Heart right ventricle (tissue), 16 donors: ENCODE measurements at regions of chr5 and their contacts with region 1.

Region 1: GRCh38 chr5:32232441-32233219 is 58.5 kb upstream of the GOLPH3 start:
- DNase-seq: peak; percentile 68 to 79
- ATAC-seq: peak; percentile 72 to 91 (median 89)
- H3K4me3 ChIP-seq: no peak overlapping the region
- H3K27ac ChIP-seq: peak overlapping the region in 7 of 10 donors; percentile 6 to 73 (median 26)
- H3K4me1 ChIP-seq: peaks cover 3 to 47% (median 26%) of the 10 kb centered on the region in 9 donors
- H3K27me3 ChIP-seq: no peaks in the 10 kb centered on the region
- CTCF ChIP-seq: peak; percentile 68 to 89 (median 84)

Region 2: DNA sequence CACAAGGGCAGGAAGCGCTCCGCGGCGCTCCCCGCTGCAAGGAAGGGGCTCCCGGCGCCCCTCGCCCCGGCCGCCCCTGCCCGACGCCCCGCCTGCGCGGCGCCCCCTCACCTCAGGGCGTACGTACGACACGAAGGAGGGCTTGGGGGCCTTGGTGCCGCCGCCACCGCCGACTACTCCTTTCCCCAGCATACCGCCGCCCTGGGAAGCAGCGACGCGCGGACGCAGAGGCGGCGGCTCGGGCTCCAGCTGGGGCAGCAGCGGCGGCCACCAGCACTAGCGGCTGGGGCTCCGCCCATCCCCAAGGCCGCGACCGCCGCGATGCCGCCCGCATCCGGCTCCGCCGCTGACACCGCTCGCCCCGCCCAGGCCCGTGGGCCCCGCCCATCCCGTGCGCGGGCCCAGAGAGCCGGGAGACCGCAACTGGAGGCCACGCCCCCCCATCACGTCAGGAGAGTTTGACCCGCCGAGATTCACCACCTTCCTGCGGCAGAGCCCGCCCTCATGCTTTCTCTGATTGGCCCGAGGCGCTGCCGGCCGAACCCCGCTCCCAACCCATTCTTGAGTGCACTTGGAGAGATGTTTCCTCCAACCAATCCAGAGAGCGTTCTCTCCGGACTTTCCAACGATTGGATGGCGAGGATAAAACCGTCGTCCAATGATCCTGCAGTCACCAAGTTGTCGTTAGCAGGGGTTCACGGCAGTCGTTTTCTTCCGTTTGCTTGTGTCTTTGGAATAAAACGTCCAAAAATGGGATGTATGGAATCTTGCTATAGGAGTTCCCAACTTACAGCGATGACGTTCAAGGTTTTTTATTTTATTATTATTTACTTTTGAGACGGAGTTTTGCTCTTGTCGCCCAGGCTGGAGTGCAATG is 80.3 kb after region 1 on chr5 and contains the start of gene MTMR12:
- intact Hi-C with region 1: loop called in 3 of 10 experiments (anchors 5 kb)
- DNase-seq: peak; percentile 100
- ATAC-seq: peak; percentile 97 to 99 (median 98)
- H3K4me3 ChIP-seq: peak within 1 kb of the TSS; percentile 65 to 96 (median 88)
- H3K27ac ChIP-seq: peak within 1 kb of the TSS; percentile 94 to 99 (median 98)
- H3K4me1 ChIP-seq: peaks cover 0 to 46% (median 37%) of the 10 kb centered on the region in 9 donors
- H3K27me3 ChIP-seq: no peaks in the 10 kb centered on the region
- CTCF ChIP-seq: peak in 1 of 9 donors; percentile 18
- total RNA-seq, gene MTMR12: 15.4 to 27.2 (median 19.9) TPM

Region 3: GRCh38 chr5:32319392-32319791 is 86.8 kb after region 1 on chr5:
- intact Hi-C with region 1: loop called in 3 of 10 experiments (anchors 5 kb)
- DNase-seq: no peak
- ATAC-seq: no peak
- H3K4me3 ChIP-seq: no peak overlapping the region
- H3K27ac ChIP-seq: no peak overlapping the region
- H3K4me1 ChIP-seq: no peaks in the 10 kb centered on the region
- H3K27me3 ChIP-seq: no peaks in the 10 kb centered on the region
- CTCF ChIP-seq: no peak

Region 4: DNA sequence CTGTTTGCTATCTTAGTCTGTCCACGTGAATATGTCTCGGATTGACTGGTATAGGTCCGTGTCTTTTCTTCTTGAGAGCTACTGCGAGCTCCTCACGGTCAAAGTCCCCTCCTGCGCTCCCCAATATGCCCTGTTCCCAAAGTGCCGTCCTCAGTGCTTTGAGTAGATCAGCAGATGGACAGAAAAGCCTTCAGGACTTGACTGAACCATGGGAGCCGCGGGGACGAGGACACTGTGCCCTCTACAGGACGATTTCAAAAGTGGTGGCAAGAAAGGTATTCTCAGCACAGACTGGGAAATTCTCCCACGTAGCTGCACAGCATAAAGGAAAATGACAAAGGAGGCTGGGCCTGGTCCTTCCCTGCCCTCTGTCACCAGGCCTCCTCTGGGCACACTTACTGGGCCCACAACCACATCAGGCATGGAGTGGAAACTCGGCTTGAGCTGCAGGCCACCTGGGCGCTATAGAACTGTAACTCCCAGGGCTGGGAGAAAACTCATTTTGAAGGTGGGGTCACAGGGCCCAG is 96.7 kb after region 1 on chr5:
- intact Hi-C with region 1: loop called (anchors 1 to 5 kb)
- DNase-seq: peak; percentile 46 to 64
- ATAC-seq: peak; percentile 80 to 94 (median 90)
- H3K4me3 ChIP-seq: no peak overlapping the region
- H3K27ac ChIP-seq: peak overlapping the region in 1 of 10 donors; percentile 14
- H3K4me1 ChIP-seq: peaks cover 0 to 20% (median 4%) of the 10 kb centered on the region in 9 donors
- H3K27me3 ChIP-seq: no peaks in the 10 kb centered on the region
- CTCF ChIP-seq: peak; percentile 55 to 82 (median 76)

Region 5: GRCh38 chr5:32471784-32472183 is 239.2 kb after region 1 on chr5:
- intact Hi-C with region 1: loop called in 1 of 10 experiments (anchors 10 kb)
- DNase-seq: no peak
- ATAC-seq: no peak
- H3K4me3 ChIP-seq: no peak overlapping the region
- H3K27ac ChIP-seq: no peak overlapping the region
- H3K4me1 ChIP-seq: no peaks in the 10 kb centered on the region
- H3K27me3 ChIP-seq: no peaks in the 10 kb centered on the region
- CTCF ChIP-seq: peak in 4 of 9 donors; percentile 5 to 32 (median 22)

Region 6: DNA sequence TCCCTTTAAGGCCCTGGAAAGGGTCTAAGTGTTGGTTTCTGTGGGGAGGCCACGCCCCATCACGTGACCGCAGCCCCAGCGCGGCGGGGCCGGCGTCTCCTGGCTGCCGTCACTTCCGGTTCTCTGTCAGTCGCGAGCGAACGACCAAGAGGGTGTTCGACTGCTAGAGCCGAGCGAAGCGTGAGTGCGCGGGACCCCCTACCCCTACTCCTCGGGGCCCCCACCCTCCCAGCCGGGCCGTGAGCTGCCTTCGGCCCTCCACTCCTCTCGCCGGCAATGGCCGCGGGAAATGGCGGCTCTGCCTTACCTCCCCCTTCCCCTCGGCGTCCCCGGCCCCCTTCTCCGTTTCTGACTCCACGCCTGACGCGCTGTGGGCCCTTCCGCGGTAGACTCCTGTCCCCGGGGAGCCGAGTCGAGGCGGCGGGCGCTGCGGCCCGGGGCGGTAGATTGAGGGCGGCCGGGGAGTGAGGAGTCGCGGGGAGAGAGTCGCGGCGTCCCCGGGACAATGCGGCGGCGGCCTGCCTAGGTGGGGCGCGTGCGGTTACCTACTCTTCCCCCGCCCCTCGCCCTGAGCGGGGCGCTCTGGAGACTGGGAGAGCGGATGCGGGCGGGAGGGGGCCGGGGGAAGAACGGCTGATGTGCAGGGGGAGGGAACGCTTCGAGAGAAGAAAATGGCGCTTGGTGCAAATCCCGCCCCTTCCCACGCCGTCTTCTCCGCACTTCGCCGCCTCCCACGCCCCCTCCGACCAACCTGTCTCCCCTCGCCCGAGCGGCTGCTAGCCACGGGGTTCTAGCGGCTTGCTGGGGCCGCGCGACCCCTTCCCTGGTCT is 353.0 kb after region 1 on chr5 and contains the start of gene SUB1:
- intact Hi-C with region 1: loop called in 2 of 10 experiments (anchors 10 kb)
- DNase-seq: peak; percentile 93 to 94
- ATAC-seq: peak; percentile 96 to 98 (median 97)
- H3K4me3 ChIP-seq: peak within 1 kb of the TSS; percentile 69 to 97 (median 88)
- H3K27ac ChIP-seq: peak within 1 kb of the TSS; percentile 95 to 100 (median 99)
- H3K4me1 ChIP-seq: peaks cover 0 to 81% (median 23%) of the 10 kb centered on the region in 9 donors
- H3K27me3 ChIP-seq: no peaks in the 10 kb centered on the region
- CTCF ChIP-seq: peak in 4 of 9 donors; percentile 9 to 27 (median 22)
- total RNA-seq, gene SUB1: 169 to 224 (median 188) TPM

Region 7: GRCh38 chr5:32613050-32613672 is 380.5 kb after region 1 on chr5:
- intact Hi-C with region 1: loop called in 4 of 10 experiments (anchors 5 to 10 kb)
- DNase-seq: peak; percentile 73 to 85
- ATAC-seq: peak in 7 of 8 donors; percentile 65 to 80 (median 70)
- H3K4me3 ChIP-seq: no peak overlapping the region
- H3K27ac ChIP-seq: peak overlapping the region in 3 of 10 donors; percentile 2 to 54 (median 8)
- H3K4me1 ChIP-seq: peaks cover 6 to 32% (median 17%) of the 10 kb centered on the region in 9 donors
- H3K27me3 ChIP-seq: no peaks in the 10 kb centered on the region
- CTCF ChIP-seq: peak; percentile 79 to 96 (median 90)